Common myeloid progenitor, CD34-positive (primary cell): ENCODE measurements at regions of chr7 and their contacts with region 1.

Region 1: DNA sequence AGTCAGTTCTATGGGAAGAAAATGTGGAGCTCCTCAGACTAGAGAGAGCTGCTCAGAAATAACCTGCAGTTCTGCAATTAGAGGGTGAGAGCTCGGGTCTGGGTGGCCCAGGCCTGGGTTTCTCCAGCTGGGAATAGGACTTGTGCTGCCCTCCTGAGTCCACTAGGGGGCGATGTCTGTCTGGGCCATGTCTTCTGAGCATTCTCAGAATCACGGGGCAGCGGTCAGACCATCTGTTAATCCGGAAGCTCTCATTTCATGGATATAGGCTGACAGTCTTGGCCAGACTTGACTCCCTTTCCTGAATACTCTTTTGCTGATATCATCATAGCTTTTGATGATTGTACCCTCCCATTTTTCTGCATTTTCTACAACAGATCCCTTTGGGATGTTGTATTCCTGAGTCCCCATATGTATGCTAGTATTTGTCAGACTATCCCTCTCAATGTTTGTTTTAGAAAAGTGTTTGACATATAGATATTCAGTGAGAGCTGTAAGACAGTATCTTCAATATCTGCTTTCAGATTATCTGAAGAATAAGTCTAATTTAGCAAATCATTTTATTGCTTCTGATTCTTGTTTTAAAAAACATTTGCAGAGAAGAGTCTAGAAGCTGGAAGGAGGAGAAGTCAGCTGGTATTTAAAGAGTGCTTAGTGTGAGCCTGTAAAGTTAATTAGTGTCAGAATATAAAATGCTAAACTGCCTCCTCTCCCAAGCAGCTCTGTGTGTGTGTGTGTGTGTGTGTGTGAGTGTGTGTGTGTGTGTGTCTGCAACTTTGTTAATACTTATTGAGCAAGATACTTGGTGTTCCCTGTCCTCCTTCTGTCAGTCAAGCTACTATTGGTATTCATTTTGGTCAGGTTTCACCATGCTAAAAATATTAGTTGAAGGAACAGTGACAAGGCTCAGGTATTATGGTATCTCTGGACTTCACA is 38.0 kb downstream of the STARD3NL start:
- DNase-seq: peak; percentile 87 to 95 (median 94)
- H3K4me3 ChIP-seq: peak overlapping the region in 1 of 7 experiments; percentile 18
- H3K27ac ChIP-seq: no peak overlapping the region
- H3K4me1 ChIP-seq: peaks cover 9 to 35% (median 26%) of the 10 kb centered on the region in 4 experiments
- H3K27me3 ChIP-seq: no peaks in the 10 kb centered on the region

Region 2: DNA sequence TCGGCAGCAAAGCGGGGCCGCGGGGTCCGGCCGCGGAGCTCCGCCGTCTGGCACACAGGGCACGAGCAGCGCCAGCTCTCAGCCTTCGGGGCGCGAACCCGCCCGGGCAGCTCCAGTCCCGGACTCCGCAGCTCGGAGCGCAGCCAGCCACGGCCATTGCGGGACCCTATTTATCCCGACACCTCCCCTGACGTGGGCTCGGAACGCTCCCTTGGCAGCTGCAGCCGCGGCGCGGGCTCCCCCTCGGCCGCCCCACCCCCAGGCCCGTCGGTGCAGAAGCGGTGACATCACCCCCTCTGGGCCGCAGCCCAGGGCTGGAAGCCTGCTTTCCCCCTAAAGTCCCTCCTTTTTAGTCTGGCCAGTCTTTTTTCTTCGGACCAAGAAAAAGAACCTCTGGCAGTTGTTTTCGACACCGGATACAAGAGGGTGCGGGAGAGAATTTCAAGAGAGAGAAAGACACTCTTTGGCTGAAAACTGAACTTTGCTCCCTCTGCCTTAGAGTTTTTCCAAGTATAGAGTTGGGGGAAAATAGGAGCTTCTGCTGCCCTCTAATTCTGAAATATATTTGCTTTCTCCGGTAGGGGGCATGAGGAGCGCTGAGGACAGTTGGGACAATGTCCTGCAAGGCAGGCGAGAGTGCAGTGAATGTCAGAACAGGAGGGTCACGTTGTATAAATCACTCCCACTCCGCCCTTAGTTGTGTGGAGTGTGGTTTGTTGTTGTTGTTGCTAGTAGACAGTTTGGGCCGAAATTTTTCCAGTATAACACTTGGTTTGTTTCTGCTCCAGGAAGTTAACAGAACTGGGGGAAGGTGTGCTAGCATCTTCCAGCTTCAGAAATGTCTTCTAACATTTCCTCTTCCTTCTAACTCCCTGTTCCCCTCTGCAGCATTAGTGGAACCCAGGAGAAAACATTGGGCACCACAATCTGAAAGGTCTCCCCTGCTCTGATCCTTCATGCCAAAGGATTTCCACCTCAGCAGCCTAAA is 299.0 kb before region 1 on chr7 and contains the start of gene SFRP4:
- CTCF ChIA-PET with region 1: interaction called, 17 read pairs
- POLR2A ChIA-PET with region 1: no interaction called
- DNase-seq: peak; percentile 53 to 63 (median 55)
- H3K4me3 ChIP-seq: peak within 1 kb of the TSS; percentile 38 to 83 (median 63)
- H3K27ac ChIP-seq: no peak within 1 kb of the TSS
- H3K4me1 ChIP-seq: peaks cover 13 to 41% (median 36%) of the 10 kb centered on the region in 4 experiments
- H3K27me3 ChIP-seq: peaks cover 0 to 12% (median 0%) of the 10 kb centered on the region in 5 experiments

Region 3: DNA sequence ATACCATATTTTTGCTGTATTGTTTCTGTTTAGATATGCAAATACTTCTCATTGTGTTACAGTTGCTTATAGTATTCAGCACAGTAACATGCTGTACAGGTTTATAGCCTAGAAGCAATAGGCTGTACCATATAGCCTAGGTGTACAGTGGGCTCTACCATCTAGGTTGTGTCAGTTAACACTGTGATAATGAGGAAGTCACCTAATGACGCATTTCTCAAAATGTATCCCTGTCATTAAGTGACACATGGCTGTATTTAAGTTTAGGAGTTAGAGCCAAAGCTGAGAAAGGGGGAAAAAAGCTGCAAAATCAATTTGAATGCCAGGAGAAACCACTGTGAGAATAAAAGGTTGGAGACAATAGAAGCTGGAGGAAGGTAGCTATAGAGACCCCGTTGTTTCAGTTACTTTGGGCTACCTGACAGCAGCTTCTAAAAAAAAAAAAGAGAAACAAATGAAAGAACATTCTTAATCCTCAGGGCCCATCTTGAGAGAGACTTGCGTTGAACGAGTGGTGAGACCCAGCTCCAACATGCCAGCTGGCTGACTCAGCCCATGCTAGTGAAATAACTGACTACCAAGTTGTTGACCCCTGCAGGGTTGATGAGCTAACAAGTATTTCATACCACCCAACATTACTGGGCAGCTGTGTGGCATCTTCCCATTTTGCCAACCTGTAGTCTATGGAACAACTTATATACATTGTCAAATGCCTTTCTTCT is 29.2 kb before region 1 on chr7:
- CTCF ChIA-PET with region 1: interaction called, 11 read pairs
- POLR2A ChIA-PET with region 1: no interaction called
- DNase-seq: peak in 2 of 3 donors; percentile 40 to 66
- H3K4me3 ChIP-seq: no peak overlapping the region
- H3K27ac ChIP-seq: no peak overlapping the region
- H3K4me1 ChIP-seq: peaks cover 2 to 35% (median 7%) of the 10 kb centered on the region in 4 experiments
- H3K27me3 ChIP-seq: no peaks in the 10 kb centered on the region

Region 4: DNA sequence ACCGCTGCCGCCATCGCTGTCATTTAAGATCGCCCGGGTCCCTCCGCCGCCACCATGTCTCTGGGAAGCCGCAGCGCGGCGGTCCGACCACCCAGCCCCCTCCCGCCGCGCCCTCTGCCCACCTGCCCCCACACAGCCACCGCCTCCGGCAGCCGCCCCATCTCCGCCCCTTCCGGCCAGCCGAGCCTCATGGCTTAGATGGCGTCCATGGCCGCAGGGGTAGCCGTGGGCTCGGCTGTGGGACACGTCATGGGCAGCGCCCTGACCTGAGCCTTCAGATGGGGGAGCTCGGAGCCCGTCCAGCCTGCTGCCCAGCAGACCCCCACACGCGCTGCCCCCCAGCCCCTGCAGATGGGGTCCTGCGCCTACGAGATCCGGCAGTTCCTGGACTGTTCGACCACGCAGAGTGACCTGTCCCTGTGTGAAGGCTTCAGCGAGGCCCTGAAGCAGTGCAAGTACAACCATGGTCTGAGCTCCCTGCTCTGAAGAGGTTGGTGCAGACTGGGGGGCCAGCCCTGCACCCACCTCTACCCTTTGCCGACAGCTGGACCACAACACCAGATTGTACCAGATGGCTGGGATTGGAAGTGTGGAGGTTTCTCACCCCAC is 95.4 kb after region 1 on chr7:
- CTCF ChIA-PET with region 1: interaction called, 56 read pairs
- POLR2A ChIA-PET with region 1: no interaction called
- DNase-seq: peak in 2 of 3 donors; percentile 30 to 60
- H3K4me3 ChIP-seq: peak overlapping the region; percentile 17 to 82 (median 72)
- H3K27ac ChIP-seq: peak overlapping the region; percentile 62 to 75
- H3K4me1 ChIP-seq: peaks cover 27 to 75% (median 38%) of the 10 kb centered on the region in 4 experiments
- H3K27me3 ChIP-seq: no peaks in the 10 kb centered on the region

Region 5: GRCh38 chr7:38335492-38336147 is 119.6 kb after region 1 on chr7:
- CTCF ChIA-PET with region 1: interaction called, 72 read pairs
- POLR2A ChIA-PET with region 1: no interaction called
- DNase-seq: peak; percentile 89 to 92 (median 91)
- H3K4me3 ChIP-seq: peak overlapping the region in 4 of 7 experiments; percentile 17 to 65 (median 40)
- H3K27ac ChIP-seq: peak overlapping the region in 1 of 2 experiments; percentile 77
- H3K4me1 ChIP-seq: peaks cover 30 to 59% (median 44%) of the 10 kb centered on the region in 4 experiments
- H3K27me3 ChIP-seq: no peaks in the 10 kb centered on the region